GM12878 (cell line): ENCODE measurements at regions of chr15 and their contacts with region 1.

Region 1: DNA sequence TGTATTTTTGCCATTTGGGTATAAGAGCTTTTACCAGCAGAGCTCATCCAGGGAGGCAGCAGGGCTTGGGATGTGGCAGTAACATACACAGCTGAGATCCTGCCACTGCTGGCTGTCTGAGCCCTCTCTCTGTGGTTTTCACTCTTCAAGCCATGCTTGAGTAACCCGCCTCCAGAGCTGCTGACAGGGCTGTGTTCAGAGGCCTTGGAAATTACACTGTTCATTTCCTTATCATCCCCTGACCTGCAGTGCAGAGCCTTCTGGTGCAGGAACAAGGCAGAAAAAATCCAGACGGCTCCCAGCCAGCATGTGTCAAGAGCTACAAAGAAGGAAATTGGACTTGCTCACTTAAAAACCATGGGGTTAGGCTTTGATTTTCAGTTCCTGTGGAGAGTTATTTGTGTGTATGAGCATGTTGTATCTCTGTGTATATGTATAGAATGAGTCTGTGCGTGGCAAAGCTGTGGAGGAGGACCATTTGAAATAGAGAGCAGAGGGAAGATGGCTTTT is 47.0 kb downstream of the ZNF609 start:
- DNase-seq: peak; percentile 48
- ATAC-seq: peak; percentile 93
- H3K4me3 ChIP-seq: no peak overlapping the region
- H3K27ac ChIP-seq: peak overlapping the region; percentile 76
- H3K4me1 ChIP-seq: peaks cover 30% of the 10 kb centered on the region
- H3K27me3 ChIP-seq: no peaks in the 10 kb centered on the region
- CTCF ChIP-seq: no peak
- EP300 ChIP-seq: 0 out of 4 replicates have a peak, but pooled peaks of 1 of the 2 experiments have one; percentile 8
- POLR2A ChIP-seq: no peak
- RAD21 ChIP-seq: no peak

Region 2: GRCh38 chr15:64443747-64444621 is 63.4 kb before region 1 on chr15:
- CTCF ChIA-PET with region 1: interaction called, 4 read pairs
- POLR2A ChIA-PET with region 1: no interaction called
- RAD21 ChIA-PET with region 1: no interaction called
- SMC1A ChIA-PET with region 1: interaction called, 11 read pairs
- in situ Hi-C with region 1: no loop called
- intact Hi-C with region 1: no loop called
- DNase-seq: no peak
- ATAC-seq: peak; percentile 78
- H3K4me3 ChIP-seq: peak overlapping the region; percentile 34; the same call in 1 of the 2 replicates
- H3K27ac ChIP-seq: peak overlapping the region; percentile 81
- H3K4me1 ChIP-seq: peaks cover 38% of the 10 kb centered on the region
- H3K27me3 ChIP-seq: no peaks in the 10 kb centered on the region
- CTCF ChIP-seq: no peak
- EP300 ChIP-seq: peak in 1 of 2 experiments; percentile 56; a peak in 1 of 4 replicates
- POLR2A ChIP-seq: no peak
- RAD21 ChIP-seq: 0 out of 2 replicates have a peak, but pooled peaks have one; percentile 20

Region 3: GRCh38 chr15:64478863-64479262 is 28.5 kb before region 1 on chr15:
- CTCF ChIA-PET with region 1: interaction called, 3 read pairs
- POLR2A ChIA-PET with region 1: no interaction called
- RAD21 ChIA-PET with region 1: interaction called, 4 read pairs
- SMC1A ChIA-PET with region 1: interaction called, 10 read pairs
- in situ Hi-C with region 1: no loop called
- intact Hi-C with region 1: no loop called
- DNase-seq: no peak
- ATAC-seq: no peak
- H3K4me3 ChIP-seq: no peak overlapping the region
- H3K27ac ChIP-seq: no peak overlapping the region
- H3K4me1 ChIP-seq: no peaks in the 10 kb centered on the region; the same call in 1 of the 2 replicates
- H3K27me3 ChIP-seq: no peaks in the 10 kb centered on the region
- CTCF ChIP-seq: no peak
- EP300 ChIP-seq: no peak
- POLR2A ChIP-seq: no peak
- RAD21 ChIP-seq: no peak

Region 4: GRCh38 chr15:64536244-64536836 is 29.0 kb after region 1 on chr15:
- CTCF ChIA-PET with region 1: interaction called, 4 read pairs
- POLR2A ChIA-PET with region 1: interaction called, 12 read pairs
- RAD21 ChIA-PET with region 1: interaction called, 9 read pairs
- SMC1A ChIA-PET with region 1: interaction called, 11 read pairs
- in situ Hi-C with region 1: no loop called
- intact Hi-C with region 1: no loop called
- DNase-seq: no peak
- ATAC-seq: peak; percentile 37
- H3K4me3 ChIP-seq: no peak overlapping the region
- H3K27ac ChIP-seq: peak overlapping the region; percentile 22; the same call in 1 of the 2 replicates
- H3K4me1 ChIP-seq: peaks cover 19% of the 10 kb centered on the region
- H3K27me3 ChIP-seq: no peaks in the 10 kb centered on the region
- CTCF ChIP-seq: no peak
- EP300 ChIP-seq: no peak
- POLR2A ChIP-seq: no peak
- RAD21 ChIP-seq: no peak

Region 5: GRCh38 chr15:64566629-64567427 is 59.5 kb after region 1 on chr15:
- CTCF ChIA-PET with region 1: interaction called, 4 read pairs
- POLR2A ChIA-PET with region 1: no interaction called
- RAD21 ChIA-PET with region 1: interaction called, 12 read pairs
- SMC1A ChIA-PET with region 1: interaction called, 15 read pairs
- in situ Hi-C with region 1: no loop called
- intact Hi-C with region 1: no loop called
- DNase-seq: no peak
- ATAC-seq: peak; percentile 57
- H3K4me3 ChIP-seq: no peak overlapping the region
- H3K27ac ChIP-seq: no peak overlapping the region
- H3K4me1 ChIP-seq: peaks cover 33% of the 10 kb centered on the region
- H3K27me3 ChIP-seq: no peaks in the 10 kb centered on the region
- CTCF ChIP-seq: no peak
- EP300 ChIP-seq: no peak
- POLR2A ChIP-seq: no peak
- RAD21 ChIP-seq: no peak

Region 6: GRCh38 chr15:64596701-64597476 is 89.5 kb after region 1 on chr15:
- CTCF ChIA-PET with region 1: interaction called, 4 read pairs
- POLR2A ChIA-PET with region 1: no interaction called
- RAD21 ChIA-PET with region 1: interaction called, 5 read pairs
- SMC1A ChIA-PET with region 1: interaction called, 11 read pairs
- in situ Hi-C with region 1: no loop called
- intact Hi-C with region 1: no loop called
- DNase-seq: no peak
- ATAC-seq: peak; percentile 79
- H3K4me3 ChIP-seq: peak overlapping the region; percentile 53
- H3K27ac ChIP-seq: peak overlapping the region; percentile 74
- H3K4me1 ChIP-seq: peaks cover 10% of the 10 kb centered on the region
- H3K27me3 ChIP-seq: no peaks in the 10 kb centered on the region
- CTCF ChIP-seq: no peak
- EP300 ChIP-seq: no peak
- POLR2A ChIP-seq: no peak
- RAD21 ChIP-seq: no peak

Region 7: GRCh38 chr15:64640146-64640871 is 133.0 kb after region 1 on chr15:
- CTCF ChIA-PET with region 1: interaction called, 9 read pairs
- POLR2A ChIA-PET with region 1: interaction called, 15 read pairs
- RAD21 ChIA-PET with region 1: interaction called, 45 read pairs
- SMC1A ChIA-PET with region 1: interaction called, 32 read pairs
- in situ Hi-C with region 1: no loop called
- intact Hi-C with region 1: no loop called
- DNase-seq: no peak
- ATAC-seq: no peak
- H3K4me3 ChIP-seq: no peak overlapping the region
- H3K27ac ChIP-seq: no peak overlapping the region
- H3K4me1 ChIP-seq: peaks cover 22% of the 10 kb centered on the region
- H3K27me3 ChIP-seq: no peaks in the 10 kb centered on the region
- CTCF ChIP-seq: no peak
- EP300 ChIP-seq: no peak
- POLR2A ChIP-seq: no peak
- RAD21 ChIP-seq: no peak

Region 8: DNA sequence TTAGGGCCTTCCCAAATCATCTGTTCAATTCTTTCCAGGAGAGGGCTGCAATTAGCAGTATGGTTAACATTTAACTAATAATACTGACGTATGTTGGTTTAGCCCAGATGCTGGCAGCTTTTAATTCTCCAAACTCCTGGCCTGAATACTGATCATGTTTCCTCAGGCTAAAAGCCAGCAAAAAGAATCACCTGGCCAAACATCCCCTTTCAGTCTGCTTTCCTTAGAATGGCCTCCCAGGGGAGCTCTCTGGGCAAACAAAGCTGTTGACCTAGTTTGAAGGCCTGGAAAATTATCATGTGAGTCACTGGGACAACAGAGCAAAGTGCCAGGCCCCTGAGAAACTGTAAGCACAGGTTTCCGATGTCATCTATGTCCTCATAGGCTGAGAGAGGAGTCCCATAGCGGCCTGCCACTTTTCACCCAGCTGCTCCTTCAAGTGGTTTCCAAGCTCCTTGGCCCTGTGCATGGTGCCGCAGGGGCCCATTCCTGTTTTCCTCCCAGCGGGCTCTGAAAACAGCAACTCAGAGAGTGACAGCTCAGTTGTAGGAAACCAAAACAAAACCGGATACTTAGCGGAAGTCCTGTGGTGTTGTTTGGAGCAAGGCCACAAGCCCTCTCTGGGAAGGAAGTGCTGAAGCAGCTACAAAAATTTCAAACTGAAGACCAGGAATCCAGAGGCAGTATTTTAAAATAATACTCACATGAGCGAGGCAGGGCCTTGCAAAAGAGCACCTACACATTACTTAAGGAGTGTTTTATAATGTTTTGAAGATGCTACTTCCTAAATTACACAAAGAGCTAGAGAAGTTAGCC is 1325.4 kb after region 1 on chr15:
- CTCF ChIA-PET with region 1: no interaction called
- POLR2A ChIA-PET with region 1: no interaction called
- RAD21 ChIA-PET with region 1: no interaction called
- SMC1A ChIA-PET with region 1: no interaction called
- in situ Hi-C with region 1: no loop called
- intact Hi-C with region 1: no loop called
- DNase-seq: no peak
- ATAC-seq: peak; percentile 56
- H3K4me3 ChIP-seq: peak overlapping the region; percentile 45; the same call in 1 of the 2 replicates
- H3K27ac ChIP-seq: peak overlapping the region; percentile 79
- H3K4me1 ChIP-seq: peaks cover 25% of the 10 kb centered on the region
- H3K27me3 ChIP-seq: no peaks in the 10 kb centered on the region
- CTCF ChIP-seq: no peak
- EP300 ChIP-seq: no peak
- POLR2A ChIP-seq: peak; percentile 36; the same call in 1 of the 2 replicates
- RAD21 ChIP-seq: no peak